CD4-positive, alpha-beta T cell (primary cell): ENCODE measurements at regions of chr2 and their contacts with region 1.

Region 1: GRCh38 chr2:96773922-96774321 is 13.2 kb downstream of the CNNM4 start:
- DNase-seq: peak; percentile 17 to 81 (median 45)
- ATAC-seq: peak; percentile 88
- H3K4me3 ChIP-seq: peak overlapping the region; percentile 68
- H3K4me3 Mint-ChIP-seq: peak overlapping the region; percentile 96
- H3K27ac ChIP-seq: peak overlapping the region; percentile 50 to 70
- H3K27ac Mint-ChIP-seq: peak overlapping the region; percentile 91
- H3K4me1 ChIP-seq: peaks cover 26% of the 10 kb centered on the region
- H3K4me1 Mint-ChIP-seq: peaks cover 22% of the 10 kb centered on the region
- H3K27me3 ChIP-seq: no peaks in the 10 kb centered on the region
- H3K27me3 Mint-ChIP-seq: no peaks in the 10 kb centered on the region
- CTCF ChIP-seq: no peak

Region 2: DNA sequence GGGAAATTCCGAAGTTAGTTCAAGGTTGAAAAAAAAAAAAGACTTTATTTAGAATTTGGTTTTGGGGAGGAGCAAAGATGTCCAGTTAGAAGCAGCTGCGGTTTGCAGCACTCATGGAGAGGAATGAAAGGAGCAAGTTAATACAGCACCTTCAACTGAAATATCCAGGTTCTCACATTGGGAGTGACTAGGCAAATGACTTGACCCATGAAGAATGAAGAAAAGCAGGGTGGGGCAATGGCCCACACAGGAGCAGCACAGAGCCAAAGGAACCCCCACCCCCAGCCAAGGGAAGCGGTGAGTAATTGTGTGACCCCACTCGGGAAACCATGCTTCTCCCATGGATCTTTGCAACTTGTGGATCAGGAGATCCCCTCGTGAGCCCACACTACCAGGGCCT is 1533.8 kb before region 1 on chr2:
- CTCF ChIA-PET with region 1: no interaction called
- POLR2A ChIA-PET with region 1: no interaction called
- intact Hi-C with region 1: no loop called
- DNase-seq: no peak
- ATAC-seq: no peak
- H3K4me3 ChIP-seq: no peak overlapping the region
- H3K4me3 Mint-ChIP-seq: no peak overlapping the region
- H3K27ac ChIP-seq: no peak overlapping the region
- H3K27ac Mint-ChIP-seq: no peak overlapping the region
- H3K4me1 ChIP-seq: no peaks in the 10 kb centered on the region
- H3K4me1 Mint-ChIP-seq: no peaks in the 10 kb centered on the region
- H3K27me3 ChIP-seq: no peaks in the 10 kb centered on the region
- H3K27me3 Mint-ChIP-seq: no peaks in the 10 kb centered on the region
- CTCF ChIP-seq: no peak

Region 3: GRCh38 chr2:96727431-96727830 is 46.5 kb before region 1 on chr2:
- CTCF ChIA-PET with region 1: no interaction called
- POLR2A ChIA-PET with region 1: no interaction called
- intact Hi-C with region 1: loop called in 1 of 2 experiments (anchors 10 kb)
- DNase-seq: no peak
- ATAC-seq: no peak
- H3K4me3 ChIP-seq: no peak overlapping the region
- H3K4me3 Mint-ChIP-seq: no peak overlapping the region
- H3K27ac ChIP-seq: no peak overlapping the region
- H3K27ac Mint-ChIP-seq: no peak overlapping the region
- H3K4me1 ChIP-seq: no peaks in the 10 kb centered on the region
- H3K4me1 Mint-ChIP-seq: no peaks in the 10 kb centered on the region
- H3K27me3 ChIP-seq: no peaks in the 10 kb centered on the region
- H3K27me3 Mint-ChIP-seq: no peaks in the 10 kb centered on the region
- CTCF ChIP-seq: no peak

Region 4: GRCh38 chr2:96792772-96793749 is 19.1 kb after region 1 on chr2:
- CTCF ChIA-PET with region 1: no interaction called
- POLR2A ChIA-PET with region 1: no interaction called
- intact Hi-C with region 1: no loop called
- DNase-seq: no peak
- ATAC-seq: no peak
- H3K4me3 ChIP-seq: no peak overlapping the region
- H3K4me3 Mint-ChIP-seq: no peak overlapping the region
- H3K27ac ChIP-seq: no peak overlapping the region
- H3K27ac Mint-ChIP-seq: no peak overlapping the region
- H3K4me1 ChIP-seq: no peaks in the 10 kb centered on the region
- H3K4me1 Mint-ChIP-seq: no peaks in the 10 kb centered on the region
- H3K27me3 ChIP-seq: no peaks in the 10 kb centered on the region
- H3K27me3 Mint-ChIP-seq: no peaks in the 10 kb centered on the region
- CTCF ChIP-seq: no peak

Region 5: DNA sequence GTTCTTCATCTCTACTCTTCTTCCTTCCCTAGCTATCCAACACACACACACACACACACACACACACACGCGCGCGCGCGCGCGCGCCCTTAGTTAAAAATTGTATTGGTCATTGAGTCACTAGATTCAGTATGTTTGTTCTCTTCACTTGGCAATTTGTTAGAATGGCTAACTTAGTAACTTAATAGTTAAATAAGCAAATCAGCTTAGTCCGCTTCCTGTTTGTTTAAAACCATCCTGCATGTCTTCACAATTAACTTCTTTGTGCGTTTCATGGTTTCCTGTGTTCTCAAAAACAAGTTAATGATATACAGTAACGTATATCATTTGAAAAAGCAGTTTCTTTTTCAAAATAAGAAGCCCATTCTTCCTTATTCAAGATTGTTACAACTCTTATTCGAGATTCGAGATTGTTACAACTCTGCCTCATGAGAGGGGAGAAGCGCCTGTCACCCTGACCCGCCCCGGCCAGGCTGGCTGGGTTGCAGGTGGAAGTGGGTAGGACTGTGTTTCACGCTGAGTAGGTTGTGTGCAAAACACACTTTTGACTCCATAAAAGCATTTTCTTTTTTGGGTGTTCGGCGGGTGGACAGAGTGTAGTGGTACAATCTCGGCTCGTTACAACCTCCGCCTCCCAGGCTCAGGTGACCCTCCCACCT is 32.7 kb after region 1 on chr2:
- CTCF ChIA-PET with region 1: no interaction called
- POLR2A ChIA-PET with region 1: interaction called, 10 read pairs
- intact Hi-C with region 1: no loop called
- DNase-seq: peak; percentile 37 to 76 (median 55)
- ATAC-seq: peak; percentile 91
- H3K4me3 ChIP-seq: peak overlapping the region; percentile 17
- H3K4me3 Mint-ChIP-seq: peak overlapping the region; percentile 84
- H3K27ac ChIP-seq: peak overlapping the region; percentile 32 to 57
- H3K27ac Mint-ChIP-seq: peak overlapping the region; percentile 92
- H3K4me1 ChIP-seq: peaks cover 36% of the 10 kb centered on the region
- H3K4me1 Mint-ChIP-seq: peaks cover 23% of the 10 kb centered on the region
- H3K27me3 ChIP-seq: no peaks in the 10 kb centered on the region
- H3K27me3 Mint-ChIP-seq: no peaks in the 10 kb centered on the region
- CTCF ChIP-seq: no peak

Region 6: GRCh38 chr2:96816128-96816835 is 42.4 kb after region 1 on chr2 and contains the start of gene CNNM3:
- CTCF ChIA-PET with region 1: interaction called, 5 read pairs
- POLR2A ChIA-PET with region 1: interaction called, 21 read pairs
- intact Hi-C with region 1: no loop called
- DNase-seq: peak; percentile 90 to 98 (median 96)
- ATAC-seq: peak; percentile 91
- H3K4me3 ChIP-seq: peak within 1 kb of the TSS; percentile 77
- H3K4me3 Mint-ChIP-seq: peak within 1 kb of the TSS; percentile 94
- H3K27ac ChIP-seq: peak within 1 kb of the TSS; percentile 52 to 60
- H3K27ac Mint-ChIP-seq: peak within 1 kb of the TSS; percentile 88
- H3K4me1 ChIP-seq: peaks cover 49% of the 10 kb centered on the region
- H3K4me1 Mint-ChIP-seq: peaks cover 62% of the 10 kb centered on the region
- H3K27me3 ChIP-seq: no peaks in the 10 kb centered on the region
- H3K27me3 Mint-ChIP-seq: no peaks in the 10 kb centered on the region
- CTCF ChIP-seq: peak; percentile 65
- total RNA-seq, gene CNNM3: 48.7 to 53.5 TPM

Region 7: GRCh38 chr2:98664327-98664726 is 1890.4 kb after region 1 on chr2:
- CTCF ChIA-PET with region 1: no interaction called
- POLR2A ChIA-PET with region 1: no interaction called
- intact Hi-C with region 1: no loop called
- DNase-seq: peak in 11 of 14 experiments; percentile 39 to 85 (median 52)
- ATAC-seq: peak; percentile 78
- H3K4me3 ChIP-seq: peak overlapping the region; percentile 44
- H3K4me3 Mint-ChIP-seq: peak overlapping the region; percentile 87
- H3K27ac ChIP-seq: peak overlapping the region; percentile 58 to 76
- H3K27ac Mint-ChIP-seq: peak overlapping the region; percentile 92
- H3K4me1 ChIP-seq: peaks cover 44% of the 10 kb centered on the region
- H3K4me1 Mint-ChIP-seq: peaks cover 78% of the 10 kb centered on the region
- H3K27me3 ChIP-seq: no peaks in the 10 kb centered on the region
- H3K27me3 Mint-ChIP-seq: no peaks in the 10 kb centered on the region
- CTCF ChIP-seq: no peak